ENCODE measurements at regions of chr6 and their contacts with region 1.

Region 1: DNA sequence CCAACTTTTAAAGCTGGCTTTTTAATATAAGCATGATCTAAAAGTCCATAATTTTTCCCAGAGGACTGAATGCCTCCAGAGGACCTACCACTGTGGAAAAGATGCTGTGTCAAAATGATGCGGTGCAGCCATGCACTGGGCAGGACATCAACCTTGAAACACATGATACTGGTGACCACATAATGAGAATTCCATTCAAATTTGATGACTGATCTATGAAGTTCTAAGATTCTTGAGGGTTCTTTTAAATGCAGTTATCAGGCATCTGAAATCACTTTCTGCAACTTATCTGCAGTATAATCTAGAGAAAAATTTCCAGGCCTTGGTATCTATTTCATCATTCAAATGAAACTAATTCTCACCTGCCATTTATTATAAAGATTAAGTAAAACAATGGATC is 15.0 kb upstream of the MARCKS start:
- DNase-seq: no peak

Region 2: GRCh38 chr6:113530803-113531202 is 311.4 kb before region 1 on chr6:
- CTCF ChIA-PET with region 1: no interaction called
- POLR2A ChIA-PET with region 1: no interaction called
- DNase-seq: no peak

Region 3: GRCh38 chr6:113825781-113826180 is 16.4 kb before region 1 on chr6:
- CTCF ChIA-PET with region 1: no interaction called
- POLR2A ChIA-PET with region 1: no interaction called
- DNase-seq: no peak

Region 4: DNA sequence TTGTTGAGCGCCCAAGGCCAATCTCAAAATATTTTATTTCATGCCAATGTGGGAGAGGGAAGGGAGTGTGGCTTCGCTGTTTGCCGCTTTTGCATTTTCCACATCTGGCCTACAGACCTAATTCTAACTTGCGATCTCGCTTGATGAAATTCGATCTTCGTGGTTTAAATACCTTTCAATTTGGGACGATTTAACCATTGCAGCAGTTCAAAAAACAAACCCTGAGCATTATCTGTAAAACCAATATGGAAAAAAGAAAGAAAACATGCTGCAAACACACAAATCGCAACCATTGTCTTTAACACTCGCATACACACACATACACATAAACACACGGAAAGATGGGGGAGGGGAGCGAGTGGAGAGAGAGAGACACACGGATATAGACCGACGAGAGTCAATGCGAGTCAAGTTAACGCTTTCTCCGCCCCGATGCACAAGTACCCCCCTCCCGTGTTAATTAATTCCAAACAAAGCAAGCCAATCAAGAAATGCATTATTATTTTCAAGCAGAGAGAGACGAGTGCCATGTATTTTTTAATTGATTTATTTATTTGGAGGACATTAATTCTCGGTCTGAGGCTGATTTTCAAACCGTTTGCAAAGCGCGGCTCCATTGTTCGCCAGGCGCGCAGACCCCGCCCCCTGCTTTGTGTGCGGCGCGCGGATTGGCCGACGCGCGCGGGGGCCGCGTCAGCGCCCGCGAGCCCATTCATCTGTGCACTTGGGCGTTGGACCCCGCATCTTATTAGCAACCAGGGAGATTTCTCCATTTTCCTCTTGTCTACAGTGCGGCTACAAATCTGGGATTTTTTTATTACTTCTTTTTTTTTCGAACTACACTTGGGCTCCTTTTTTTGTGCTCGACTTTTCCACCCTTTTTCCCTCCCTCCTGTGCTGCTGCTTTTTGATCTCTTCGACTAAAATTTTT is 14.7 kb after region 1 on chr6 and contains the start of gene MARCKS:
- CTCF ChIA-PET with region 1: interaction called, 4 read pairs
- POLR2A ChIA-PET with region 1: interaction called, 13 read pairs
- DNase-seq: peak; percentile 80

Measured in HEK293T (cell line).